ENCODE measurements at regions of chr2 and their contacts with region 1.

Region 1: GRCh38 chr2:165293440-165294353 is 54.5 kb downstream of the SCN2A start:
- DNase-seq: no peak
- H3K4me3 ChIP-seq: no peak overlapping the region
- H3K27ac ChIP-seq: no peak overlapping the region
- H3K4me1 ChIP-seq: no peaks in the 10 kb centered on the region
- H3K27me3 ChIP-seq: no peaks in the 10 kb centered on the region
- CTCF ChIP-seq: peak; percentile 42 to 71 (median 59)

Region 2: DNA sequence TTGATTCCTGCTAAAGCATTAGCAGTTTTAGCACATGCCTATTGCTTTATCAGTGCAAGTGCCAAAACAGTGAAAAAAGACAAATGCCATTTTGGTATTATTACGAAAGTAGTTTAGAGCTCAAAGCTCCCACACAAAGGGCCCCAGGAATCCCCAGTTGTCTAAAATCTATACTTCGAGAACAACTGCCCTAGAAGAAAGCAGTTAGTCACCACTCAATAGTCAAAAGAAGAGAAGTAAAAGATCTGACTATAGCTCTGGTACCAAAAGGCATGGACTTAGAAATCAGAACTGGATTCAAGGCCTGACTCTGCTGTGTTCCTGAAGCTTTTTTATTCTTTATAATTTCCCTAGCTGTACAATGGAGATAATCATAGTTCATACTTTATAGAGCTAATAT is 111.7 kb before region 1 on chr2:
- intact Hi-C with region 1: no loop called
- DNase-seq: no peak
- H3K4me3 ChIP-seq: no peak overlapping the region
- H3K27ac ChIP-seq: no peak overlapping the region
- H3K4me1 ChIP-seq: no peaks in the 10 kb centered on the region
- H3K27me3 ChIP-seq: no peaks in the 10 kb centered on the region
- CTCF ChIP-seq: no peak

Region 3: GRCh38 chr2:165245081-165245793 is 48.5 kb before region 1 on chr2:
- intact Hi-C with region 1: loop called (anchors 5 kb)
- DNase-seq: no peak
- H3K4me3 ChIP-seq: no peak overlapping the region
- H3K27ac ChIP-seq: no peak overlapping the region
- H3K4me1 ChIP-seq: no peaks in the 10 kb centered on the region
- H3K27me3 ChIP-seq: no peaks in the 10 kb centered on the region
- CTCF ChIP-seq: no peak

Region 4: GRCh38 chr2:166170356-166170755 is 876.7 kb after region 1 on chr2:
- intact Hi-C with region 1: no loop called
- DNase-seq: no peak
- H3K4me3 ChIP-seq: no peak overlapping the region
- H3K27ac ChIP-seq: no peak overlapping the region
- H3K4me1 ChIP-seq: no peaks in the 10 kb centered on the region
- H3K27me3 ChIP-seq: no peaks in the 10 kb centered on the region
- CTCF ChIP-seq: no peak